Aorta (tissue), 5 donors: ENCODE measurements at regions of chr5 and their contacts with region 1.

Region 1: DNA sequence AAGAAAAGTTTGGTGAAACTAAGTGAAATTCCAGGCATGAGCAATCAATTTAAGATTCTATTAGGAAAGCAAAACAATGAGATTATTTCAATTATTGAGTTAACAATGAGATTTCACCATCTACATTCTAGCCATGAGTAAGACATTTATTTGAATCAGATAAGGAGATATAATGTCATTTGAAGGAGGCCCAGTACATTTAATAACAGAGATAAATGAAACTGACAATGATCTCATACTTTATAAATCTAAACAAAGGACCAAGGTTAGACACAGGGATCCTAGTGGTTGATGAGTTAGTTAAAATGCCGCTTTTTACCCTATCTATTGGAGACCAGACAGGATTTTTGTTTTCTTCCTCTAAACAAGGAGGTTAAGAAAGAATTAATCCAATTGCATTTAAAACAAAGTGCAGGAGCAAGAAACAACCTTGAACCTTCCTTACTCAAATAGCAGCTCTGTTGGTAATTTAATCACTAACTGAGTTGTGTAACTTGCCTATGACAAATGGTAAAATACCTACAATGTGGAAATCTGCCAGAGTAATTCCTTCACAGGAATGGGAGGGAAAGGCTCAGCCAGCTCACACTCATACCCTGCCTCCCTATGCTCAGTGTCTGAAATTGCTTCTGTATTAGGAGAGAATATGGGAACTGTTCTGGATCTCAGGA is 103.5 kb upstream of the NR3C1 start:
- DNase-seq: no peak
- ATAC-seq: no peak
- H3K4me3 ChIP-seq: no peak overlapping the region
- H3K27ac ChIP-seq: no peak overlapping the region
- H3K4me1 ChIP-seq: no peaks in the 10 kb centered on the region
- H3K27me3 ChIP-seq: peaks cover 0 to 1% of the 10 kb centered on the region in 2 donors

Region 2: GRCh38 chr5:143629871-143630659 is 123.0 kb after region 1 on chr5:
- intact Hi-C with region 1: loop called in 1 of 2 experiments (anchors 10 kb)
- DNase-seq: no peak
- ATAC-seq: no peak
- H3K4me3 ChIP-seq: no peak overlapping the region
- H3K27ac ChIP-seq: no peak overlapping the region
- H3K4me1 ChIP-seq: peaks cover 0 to 1% of the 10 kb centered on the region in 2 donors
- H3K27me3 ChIP-seq: no peaks in the 10 kb centered on the region